Activated CD8-positive, alpha-beta memory T cell treated with anti-CD3 and anti-CD28 coated beads, Interleukin-2, amount 10 ng/mL, durations not matched to agents 7 days and 5 days (primary cell): ENCODE measurements at regions of chr1 and their contacts with region 1.

Region 1: DNA sequence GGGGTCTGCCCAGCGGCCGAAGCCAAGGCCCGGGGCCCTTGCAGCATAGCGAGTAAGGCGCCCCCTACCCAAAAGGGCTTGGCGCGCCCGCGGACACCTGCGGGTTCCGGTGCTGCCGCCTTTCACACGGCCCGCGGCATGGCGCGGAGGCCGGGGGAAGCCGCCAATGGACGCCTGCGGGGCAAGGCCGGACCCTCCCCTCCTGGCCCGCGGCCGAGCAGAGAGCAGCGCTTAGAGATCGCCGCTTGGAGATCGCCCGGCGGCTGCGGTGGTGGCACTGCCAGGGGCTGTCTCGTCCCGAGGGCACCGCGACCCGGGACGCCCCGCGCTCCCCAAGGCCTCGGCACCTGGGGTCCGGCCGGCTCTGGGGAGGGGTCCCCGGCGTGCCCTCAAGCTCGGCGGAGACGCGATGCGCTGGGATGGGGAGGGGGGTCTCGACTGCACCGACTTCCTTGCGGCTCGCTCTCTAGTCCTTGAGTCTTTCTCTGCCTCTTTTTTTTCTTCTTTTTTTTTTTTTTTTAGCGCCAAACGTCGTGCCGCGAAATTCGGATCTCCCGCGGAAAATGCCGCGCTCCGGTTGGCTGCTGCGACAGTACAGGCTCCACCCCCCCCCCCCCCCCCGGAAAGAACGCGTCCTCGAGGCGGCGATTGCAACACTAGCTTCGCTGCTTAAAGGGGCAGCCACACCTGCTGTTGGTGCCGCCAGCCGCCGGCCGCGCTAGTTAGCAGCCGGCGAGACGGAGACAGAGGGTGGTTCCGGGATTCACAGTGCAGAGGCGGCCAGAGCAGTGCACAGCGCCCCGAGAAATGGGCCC is at the start of gene E2F2:
- DNase-seq: peak; percentile 92
- ATAC-seq: peak; percentile 73
- H3K4me3 Mint-ChIP-seq: peak within 1 kb of the TSS; percentile 91
- H3K27ac Mint-ChIP-seq: peak within 1 kb of the TSS; percentile 94
- H3K4me1 Mint-ChIP-seq: peaks cover 69% of the 10 kb centered on the region
- H3K27me3 Mint-ChIP-seq: peaks cover 3% of the 10 kb centered on the region
- total RNA-seq, gene E2F2: 77.4 to 103 TPM

Region 2: DNA sequence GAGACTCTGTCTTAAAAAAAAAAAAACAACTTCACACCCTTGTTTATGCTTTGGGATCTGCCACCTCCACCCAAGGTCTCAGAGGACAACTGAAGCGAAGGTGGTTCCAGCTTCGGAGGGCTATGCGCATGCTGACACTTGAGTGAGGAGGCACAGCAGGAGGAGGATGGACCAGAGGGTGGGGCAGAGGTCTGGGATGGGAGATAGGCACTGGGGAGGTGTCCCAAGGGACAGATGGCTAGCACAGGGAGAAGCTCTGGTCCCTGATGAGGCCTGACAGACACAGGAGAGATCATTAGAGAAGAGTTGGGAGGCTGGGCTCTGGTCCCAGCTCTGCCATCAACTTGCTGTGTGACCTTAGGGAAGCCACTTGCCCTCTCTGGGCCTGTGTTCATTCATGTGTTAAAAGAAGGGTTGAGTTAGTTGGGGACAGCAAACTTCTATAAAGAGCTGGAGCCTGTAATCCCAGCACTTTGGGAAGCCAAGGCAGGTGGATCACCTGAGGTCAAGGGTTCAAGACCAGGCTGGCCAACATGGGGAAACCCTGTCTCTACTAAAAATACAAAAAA is 16.8 kb before region 1 on chr1:
- CTCF ChIA-PET with region 1: interaction called, 25 read pairs
- DNase-seq: no peak
- ATAC-seq: no peak
- H3K4me3 Mint-ChIP-seq: no peak overlapping the region
- H3K27ac Mint-ChIP-seq: no peak overlapping the region
- H3K4me1 Mint-ChIP-seq: no peaks in the 10 kb centered on the region
- H3K27me3 Mint-ChIP-seq: no peaks in the 10 kb centered on the region

Region 3: DNA sequence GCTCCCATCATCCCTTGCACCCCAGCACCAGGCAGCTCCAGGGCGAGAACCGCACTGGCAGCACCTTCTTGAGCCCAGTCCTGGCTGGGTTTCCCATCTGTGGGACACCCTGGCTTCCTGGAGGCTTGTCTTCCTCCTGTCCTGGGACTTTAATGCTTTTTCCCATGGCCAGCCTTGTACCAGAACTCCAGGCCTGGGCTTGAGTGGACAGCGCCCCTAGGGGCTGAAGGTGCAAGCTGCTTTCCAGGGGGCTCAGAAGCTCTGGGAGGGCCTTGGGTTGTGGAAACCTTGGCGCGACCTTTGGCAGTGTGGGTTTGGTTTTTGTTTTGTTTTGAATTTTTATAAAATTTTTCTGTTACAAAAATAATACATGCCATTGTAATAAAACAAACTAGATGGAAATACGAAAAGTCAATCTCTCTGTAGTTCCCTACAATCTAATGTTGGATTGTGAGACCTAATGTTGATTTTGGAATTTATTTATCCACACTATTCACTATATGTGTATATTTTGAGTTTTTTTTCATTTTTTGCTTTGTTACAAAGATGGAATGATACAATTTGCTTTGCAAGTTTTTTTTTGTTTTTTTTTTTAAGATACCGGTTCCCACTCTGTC is 126.8 kb after region 1 on chr1:
- CTCF ChIA-PET with region 1: interaction called, 10 read pairs
- DNase-seq: peak; percentile 62
- ATAC-seq: peak; percentile 80
- H3K4me3 Mint-ChIP-seq: no peak overlapping the region
- H3K27ac Mint-ChIP-seq: no peak overlapping the region
- H3K4me1 Mint-ChIP-seq: no peaks in the 10 kb centered on the region
- H3K27me3 Mint-ChIP-seq: peaks cover 15% of the 10 kb centered on the region